A673 (cell line): ENCODE measurements at regions of chr17 and their contacts with region 1.

Region 1: GRCh38 chr17:65561394-65562205 is at the start of gene AXIN2:
- DNase-seq: peak; percentile 95
- H3K4me3 ChIP-seq: peak within 1 kb of the TSS; percentile 91
- H3K27ac ChIP-seq: peak within 1 kb of the TSS; percentile 82
- H3K4me1 ChIP-seq: peaks cover 12% of the 10 kb centered on the region
- H3K27me3 ChIP-seq: no peaks in the 10 kb centered on the region
- CTCF ChIP-seq: 0 out of 2 replicates have a peak, but pooled peaks have one; percentile 27
- total RNA-seq, gene AXIN2: 10.7 and 15.2 TPM in 2 replicates

Region 2: GRCh38 chr17:65794572-65794971 is 233.0 kb after region 1 on chr17:
- CTCF ChIA-PET with region 1: no interaction called
- POLR2A ChIA-PET with region 1: no interaction called
- intact Hi-C with region 1: loop called (anchors 10 kb)
- DNase-seq: peak; percentile 52
- H3K4me3 ChIP-seq: no peak overlapping the region
- H3K27ac ChIP-seq: no peak overlapping the region
- H3K4me1 ChIP-seq: no peaks in the 10 kb centered on the region
- H3K27me3 ChIP-seq: no peaks in the 10 kb centered on the region
- CTCF ChIP-seq: peak; percentile 61

Region 3: DNA sequence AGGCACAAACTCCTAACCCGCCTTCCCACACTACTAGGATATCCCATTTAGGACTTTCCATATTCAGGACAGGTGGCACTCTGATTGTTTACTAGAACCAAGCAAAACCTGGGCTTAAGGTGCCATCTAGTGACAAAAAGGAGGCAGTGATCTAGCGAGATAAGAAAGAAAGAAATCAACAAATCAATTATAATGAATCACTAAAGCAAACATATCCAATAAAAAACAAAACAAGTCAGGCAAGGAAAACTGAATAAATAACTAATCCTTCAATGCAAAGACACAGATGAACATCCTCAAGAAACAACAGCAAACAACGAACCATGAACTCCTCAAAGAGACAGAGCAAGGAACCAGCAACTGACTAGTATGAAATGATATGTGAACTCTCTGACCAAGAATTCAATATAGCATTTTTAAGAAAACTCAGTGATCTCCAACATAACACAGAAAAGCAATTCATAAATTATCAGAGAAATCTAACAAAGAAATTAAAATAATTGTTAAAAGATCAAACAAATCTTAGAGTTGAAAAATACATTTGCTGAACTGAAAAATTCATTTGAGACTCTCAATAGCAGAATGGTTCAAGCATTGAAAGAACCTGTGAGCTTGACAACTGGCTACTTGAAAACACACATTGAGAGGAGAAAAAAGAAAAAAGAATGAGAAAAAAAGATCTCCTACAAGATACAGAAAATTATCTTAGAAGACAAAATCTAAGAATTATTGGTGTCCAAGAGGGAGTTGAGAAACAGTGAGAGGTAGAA is 426.7 kb after region 1 on chr17:
- CTCF ChIA-PET with region 1: no interaction called
- POLR2A ChIA-PET with region 1: no interaction called
- intact Hi-C with region 1: loop called (anchors 10 kb)
- DNase-seq: peak; percentile 49
- H3K4me3 ChIP-seq: no peak overlapping the region
- H3K27ac ChIP-seq: no peak overlapping the region
- H3K4me1 ChIP-seq: no peaks in the 10 kb centered on the region
- H3K27me3 ChIP-seq: no peaks in the 10 kb centered on the region
- CTCF ChIP-seq: peak; percentile 64